ENCODE measurements at regions of chr1 and their contacts with region 1.

Region 1: DNA sequence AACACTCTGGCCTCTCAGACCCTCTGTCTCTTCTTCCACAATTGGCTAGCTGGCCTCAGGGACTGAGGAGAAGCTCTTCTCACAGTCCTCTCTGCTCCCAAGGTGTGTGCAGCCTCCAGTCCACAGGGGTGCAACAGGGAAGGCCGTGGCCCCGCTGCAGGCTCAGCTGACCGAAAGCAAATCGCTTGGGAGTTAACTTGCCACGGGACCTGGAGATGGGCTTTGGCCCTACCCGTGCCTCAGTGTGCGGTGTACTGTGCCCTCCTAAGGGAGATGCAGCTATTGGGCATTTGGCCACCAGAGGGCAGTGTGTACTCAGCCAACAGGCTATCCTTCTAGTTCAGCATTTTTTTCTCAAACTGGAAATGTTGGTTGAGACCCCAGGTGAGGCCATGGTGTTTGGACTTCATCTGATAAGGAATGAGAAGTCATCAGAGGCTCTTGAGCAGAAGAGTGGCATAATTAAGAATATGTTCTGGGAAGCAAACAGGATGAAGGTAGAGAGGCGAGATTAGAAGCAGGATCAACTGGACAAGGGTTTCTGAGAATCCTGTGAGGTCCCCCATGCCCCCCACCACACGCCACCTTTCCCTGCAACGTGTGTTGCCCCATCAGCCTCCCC is 42.5 kb upstream of the TMEM125 start:
- DNase-seq: peak; percentile 37
- H3K4me3 ChIP-seq: no peak overlapping the region
- H3K27ac ChIP-seq: no peak overlapping the region
- H3K4me1 ChIP-seq: no peaks in the 10 kb centered on the region
- H3K27me3 ChIP-seq: no peaks in the 10 kb centered on the region
- CTCF ChIP-seq: peak; percentile 93 to 96

Region 2: GRCh38 chr1:42777852-42778251 is 449.4 kb before region 1 on chr1:
- CTCF ChIA-PET with region 1: no interaction called
- dilution Hi-C with region 1: no loop called
- in situ Hi-C with region 1: no loop called
- intact Hi-C with region 1: loop called (anchors 5 kb)
- DNase-seq: no peak
- H3K4me3 ChIP-seq: no peak overlapping the region
- H3K27ac ChIP-seq: no peak overlapping the region
- H3K4me1 ChIP-seq: no peaks in the 10 kb centered on the region
- H3K27me3 ChIP-seq: no peaks in the 10 kb centered on the region
- CTCF ChIP-seq: peak; percentile 77 to 83

Region 3: DNA sequence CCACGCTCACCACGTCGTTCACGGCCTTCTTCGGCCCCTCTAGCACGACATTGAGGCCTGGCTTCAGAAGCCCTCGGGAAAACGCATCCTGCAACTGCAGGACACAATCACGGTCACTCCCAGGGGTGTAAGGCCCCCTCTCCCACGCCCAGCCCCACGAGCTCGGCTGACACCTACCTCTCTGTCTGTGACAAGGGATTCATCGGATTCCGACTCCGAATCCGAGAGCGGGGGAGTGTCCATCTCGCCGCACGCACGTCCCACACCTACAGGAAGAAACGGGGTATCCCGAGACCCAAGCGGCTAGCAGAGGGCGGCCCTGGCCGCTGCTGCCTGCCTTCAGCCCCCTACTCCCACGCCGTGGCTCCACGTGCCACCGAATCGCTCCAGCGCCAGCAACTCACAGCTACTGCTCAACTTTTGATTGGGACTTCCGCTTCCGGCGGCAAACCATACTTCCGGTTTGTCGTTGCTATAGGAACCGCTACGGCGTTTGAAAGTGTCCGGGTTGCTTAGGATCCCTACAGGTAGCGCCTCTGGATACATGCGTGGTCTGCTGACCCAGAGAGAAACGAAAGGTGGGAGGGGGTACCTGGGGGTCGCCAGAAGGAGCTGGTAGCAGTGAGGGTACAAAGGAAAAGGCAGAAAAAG is 55.3 kb before region 1 on chr1 and contains the starts of genes CFAP57 and EBNA1BP2:
- CTCF ChIA-PET with region 1: no interaction called
- dilution Hi-C with region 1: no loop called
- in situ Hi-C with region 1: no loop called
- intact Hi-C with region 1: loop called (anchors 2 kb)
- DNase-seq: peak; percentile 92
- H3K4me3 ChIP-seq: peak within 1 kb of the TSS; percentile 56 to 100 (median 94)
- H3K27ac ChIP-seq: peak within 1 kb of the TSS; percentile 55
- H3K4me1 ChIP-seq: peaks cover 11% of the 10 kb centered on the region
- H3K27me3 ChIP-seq: no peaks in the 10 kb centered on the region
- CTCF ChIP-seq: no peak
- total RNA-seq, gene CFAP57: 0.26 to 0.50 TPM
- total RNA-seq, gene EBNA1BP2: 56.5 to 115 TPM

Region 4: GRCh38 chr1:43414634-43415223 is 187.5 kb after region 1 on chr1:
- CTCF ChIA-PET with region 1: no interaction called
- dilution Hi-C with region 1: no loop called
- in situ Hi-C with region 1: loop called (anchors 10 to 25 kb)
- intact Hi-C with region 1: loop called (anchors 1 kb)
- DNase-seq: peak; percentile 24
- H3K4me3 ChIP-seq: no peak overlapping the region
- H3K27ac ChIP-seq: no peak overlapping the region
- H3K4me1 ChIP-seq: no peaks in the 10 kb centered on the region
- H3K27me3 ChIP-seq: no peaks in the 10 kb centered on the region
- CTCF ChIP-seq: peak; percentile 42 to 53

Region 5: GRCh38 chr1:43668956-43669355 is 441.7 kb after region 1 on chr1:
- CTCF ChIA-PET with region 1: no interaction called
- dilution Hi-C with region 1: no loop called
- in situ Hi-C with region 1: loop called in 1 of 2 experiments (anchors 25 kb)
- intact Hi-C with region 1: loop called (anchors 5 kb)
- DNase-seq: peak; percentile 65
- H3K4me3 ChIP-seq: no peak overlapping the region
- H3K27ac ChIP-seq: peak overlapping the region; percentile 21
- H3K4me1 ChIP-seq: peaks cover 45% of the 10 kb centered on the region
- H3K27me3 ChIP-seq: no peaks in the 10 kb centered on the region
- CTCF ChIP-seq: no peak

Measured in mammary epithelial cell (primary cell).